GM23248 (cell line): ENCODE measurements at regions of chr21 and their contacts with region 1.

Region 1: GRCh38 chr21:33641336-33642026 is at the start of gene CRYZL1:
- DNase-seq: peak; percentile 100
- H3K4me3 ChIP-seq: peak within 1 kb of the TSS; percentile 92
- H3K27ac ChIP-seq: peak within 1 kb of the TSS; percentile 89
- H3K4me1 ChIP-seq: peaks cover 23% of the 10 kb centered on the region
- H3K27me3 ChIP-seq: no peaks in the 10 kb centered on the region
- total RNA-seq, gene CRYZL1: 13.6 and 18.3 TPM in 2 replicates

Region 2: DNA sequence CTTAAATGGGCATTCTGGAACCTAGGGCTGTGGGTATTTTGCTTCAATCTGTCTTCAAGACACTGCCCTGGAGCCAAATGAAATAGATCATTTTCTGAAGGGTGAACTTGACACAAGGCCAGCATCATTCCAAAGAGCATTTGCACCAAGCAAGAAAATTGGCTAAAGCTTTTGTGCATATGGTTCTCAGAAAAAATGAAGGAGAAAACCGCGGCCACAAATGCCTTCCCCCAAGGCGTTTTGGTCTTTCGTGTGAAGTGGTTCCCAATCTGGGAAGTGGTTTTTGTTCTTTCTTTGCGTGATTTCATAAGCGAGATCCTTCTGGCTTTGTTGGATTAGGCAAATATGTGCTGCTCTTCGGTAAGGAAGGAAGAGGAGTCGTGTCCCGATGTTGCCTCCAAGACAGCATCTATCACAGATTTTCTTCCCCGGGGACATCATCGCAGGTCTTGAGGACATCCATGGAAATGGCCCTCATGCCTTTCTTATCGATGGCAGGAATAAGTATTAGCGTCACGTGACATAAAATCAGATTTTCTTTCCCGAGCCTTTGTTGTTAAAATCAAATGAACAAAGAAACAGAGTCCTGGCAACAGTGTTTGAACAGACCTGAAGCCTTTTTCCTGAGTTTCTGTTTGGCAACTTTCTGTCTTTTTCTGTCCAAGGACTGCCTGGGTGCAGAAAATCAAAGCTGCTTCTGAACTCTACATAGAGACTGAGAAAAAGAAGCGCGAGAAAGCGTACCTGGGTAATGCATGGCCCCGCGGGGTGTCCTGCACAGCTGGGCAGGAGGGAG is 243.1 kb after region 1 on chr21:
- in situ Hi-C with region 1: loop called (anchors 10 kb)
- DNase-seq: peak; percentile 56
- H3K4me3 ChIP-seq: peak overlapping the region; percentile 43
- H3K27ac ChIP-seq: no peak overlapping the region
- H3K4me1 ChIP-seq: no peaks in the 10 kb centered on the region
- H3K27me3 ChIP-seq: peaks cover 3% of the 10 kb centered on the region; the same call in 1 of the 2 replicates